GM10248 (cell line): ENCODE measurements at regions of chr1 and their contacts with region 1.

Region 1: DNA sequence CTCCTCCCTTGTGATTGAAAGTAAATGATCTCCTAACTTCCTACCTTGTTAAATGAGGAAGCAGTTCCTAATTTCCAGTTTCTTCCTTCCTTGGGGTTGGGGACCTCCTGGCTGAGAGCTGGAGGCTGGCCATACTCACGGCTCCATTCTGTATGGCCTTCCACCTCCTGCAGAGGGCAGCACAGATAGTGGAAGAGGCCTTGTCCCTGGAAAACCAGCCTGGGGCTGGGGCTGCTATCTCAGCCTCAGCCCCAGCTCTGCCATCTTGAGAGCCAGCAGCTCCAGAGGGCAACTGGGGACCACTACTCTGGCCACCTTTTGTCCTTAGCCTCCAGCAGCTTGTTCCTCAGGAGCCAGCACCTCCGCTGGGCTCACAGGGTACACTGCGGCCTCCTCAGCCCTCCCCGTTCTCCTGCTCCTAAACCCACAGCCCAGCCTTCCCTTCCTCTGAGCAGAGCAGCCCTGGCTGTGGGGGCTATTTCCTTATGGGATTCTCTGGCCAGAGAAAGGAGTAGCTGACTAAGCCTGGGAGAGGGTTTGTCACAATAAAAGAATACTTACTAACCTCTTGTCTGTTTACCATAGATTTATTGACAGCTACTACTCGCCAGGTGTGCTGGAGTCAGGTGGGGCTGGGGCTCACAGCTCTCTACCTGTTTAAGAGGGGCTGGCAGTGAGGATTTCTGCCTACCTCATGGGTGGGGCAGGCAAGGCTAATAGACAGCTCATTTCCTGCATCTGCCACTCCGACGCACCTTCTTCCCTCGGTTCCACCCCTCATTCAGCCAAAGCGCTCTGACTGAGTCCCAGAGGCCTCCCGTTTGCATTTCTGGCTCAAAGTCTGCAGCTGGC is 6.3 kb downstream of the TMEM234 start:
- DNase-seq: peak; percentile 69
- CTCF ChIP-seq: peak; percentile 93

Region 2: GRCh38 chr1:32005522-32005921 is 210.3 kb before region 1 on chr1:
- CTCF ChIA-PET with region 1: no interaction called
- POLR2A ChIA-PET with region 1: no interaction called
- DNase-seq: no peak
- CTCF ChIP-seq: no peak

Region 3: GRCh38 chr1:32200226-32201010 is 15.4 kb before region 1 on chr1 and contains the start of gene CCDC28B:
- CTCF ChIA-PET with region 1: interaction called, 39 read pairs
- POLR2A ChIA-PET with region 1: interaction called, 3 read pairs
- DNase-seq: peak; percentile 78
- CTCF ChIP-seq: no peak

Region 4: GRCh38 chr1:32234792-32235191 is 18.9 kb after region 1 on chr1:
- CTCF ChIA-PET with region 1: interaction called, 156 read pairs
- POLR2A ChIA-PET with region 1: no interaction called
- DNase-seq: no peak
- CTCF ChIP-seq: no peak

Region 5: DNA sequence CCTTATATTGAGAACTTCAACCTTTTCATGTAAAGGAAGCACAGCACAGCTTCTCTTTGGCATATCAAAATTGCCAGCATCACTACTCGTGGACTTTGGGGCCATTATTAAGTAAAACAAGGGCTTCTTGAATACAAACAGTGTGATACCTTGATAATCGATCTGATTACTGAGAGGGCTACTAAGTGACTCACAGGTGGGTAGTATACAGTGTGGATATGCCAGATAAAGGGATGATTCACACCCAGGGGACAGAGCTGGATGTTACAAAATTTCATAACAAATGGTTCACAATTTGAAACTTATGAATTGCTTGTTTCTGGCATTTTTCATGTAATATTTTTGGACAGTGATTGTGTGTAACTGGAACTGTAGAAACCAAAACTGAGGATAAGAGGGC is 91.5 kb after region 1 on chr1:
- CTCF ChIA-PET with region 1: interaction called, 15 read pairs
- POLR2A ChIA-PET with region 1: no interaction called
- DNase-seq: no peak
- CTCF ChIP-seq: no peak

Region 6: GRCh38 chr1:32335790-32336590 is 120.1 kb after region 1 on chr1 and contains the start of gene MARCKSL1:
- CTCF ChIA-PET with region 1: interaction called, 9 read pairs
- POLR2A ChIA-PET with region 1: interaction called, 20 read pairs
- DNase-seq: peak; percentile 86
- CTCF ChIP-seq: no peak

Region 7: DNA sequence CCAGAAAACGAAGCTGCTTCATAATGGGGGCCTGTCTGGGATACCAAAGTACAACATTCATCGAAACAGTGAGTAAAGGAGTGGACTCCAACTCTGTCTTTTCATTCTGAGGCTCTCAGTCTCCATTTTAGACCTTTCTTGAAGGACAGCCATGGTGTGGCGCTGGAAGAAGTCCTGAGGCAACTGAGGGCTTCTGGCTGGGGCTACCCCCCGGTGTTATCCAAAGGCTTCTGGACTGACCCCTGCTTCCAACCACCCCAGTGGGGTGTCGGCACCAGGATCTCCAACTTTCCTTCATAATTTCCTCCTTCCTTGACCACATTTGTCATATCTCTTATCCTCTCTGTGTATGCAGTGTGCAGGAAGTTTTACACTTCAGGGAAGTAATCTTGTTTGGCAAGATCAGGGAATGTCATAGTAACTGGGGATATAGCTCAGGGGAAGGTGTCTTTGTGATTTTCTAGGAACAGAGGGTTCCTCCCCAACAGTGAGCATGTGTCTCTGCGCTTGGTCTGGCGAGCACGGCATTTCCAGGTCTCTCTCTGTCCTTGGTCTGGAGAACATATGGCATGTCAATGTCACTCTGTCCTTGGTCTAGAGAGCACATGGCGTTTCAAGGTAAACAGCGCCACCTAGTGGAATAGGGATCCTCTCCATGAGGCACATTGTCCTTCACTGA is 197.8 kb after region 1 on chr1:
- CTCF ChIA-PET with region 1: interaction called, 14 read pairs
- POLR2A ChIA-PET with region 1: no interaction called
- DNase-seq: peak; percentile 51
- CTCF ChIP-seq: peak; percentile 70

Region 8: GRCh38 chr1:32538887-32539583 is 323.2 kb after region 1 on chr1 and contains the start of gene ZBTB8A:
- CTCF ChIA-PET with region 1: no interaction called
- POLR2A ChIA-PET with region 1: no interaction called
- DNase-seq: peak; percentile 37
- CTCF ChIP-seq: no peak